Calu3 (cell line): ENCODE measurements at regions of chr17 and their contacts with region 1.

Region 1: DNA sequence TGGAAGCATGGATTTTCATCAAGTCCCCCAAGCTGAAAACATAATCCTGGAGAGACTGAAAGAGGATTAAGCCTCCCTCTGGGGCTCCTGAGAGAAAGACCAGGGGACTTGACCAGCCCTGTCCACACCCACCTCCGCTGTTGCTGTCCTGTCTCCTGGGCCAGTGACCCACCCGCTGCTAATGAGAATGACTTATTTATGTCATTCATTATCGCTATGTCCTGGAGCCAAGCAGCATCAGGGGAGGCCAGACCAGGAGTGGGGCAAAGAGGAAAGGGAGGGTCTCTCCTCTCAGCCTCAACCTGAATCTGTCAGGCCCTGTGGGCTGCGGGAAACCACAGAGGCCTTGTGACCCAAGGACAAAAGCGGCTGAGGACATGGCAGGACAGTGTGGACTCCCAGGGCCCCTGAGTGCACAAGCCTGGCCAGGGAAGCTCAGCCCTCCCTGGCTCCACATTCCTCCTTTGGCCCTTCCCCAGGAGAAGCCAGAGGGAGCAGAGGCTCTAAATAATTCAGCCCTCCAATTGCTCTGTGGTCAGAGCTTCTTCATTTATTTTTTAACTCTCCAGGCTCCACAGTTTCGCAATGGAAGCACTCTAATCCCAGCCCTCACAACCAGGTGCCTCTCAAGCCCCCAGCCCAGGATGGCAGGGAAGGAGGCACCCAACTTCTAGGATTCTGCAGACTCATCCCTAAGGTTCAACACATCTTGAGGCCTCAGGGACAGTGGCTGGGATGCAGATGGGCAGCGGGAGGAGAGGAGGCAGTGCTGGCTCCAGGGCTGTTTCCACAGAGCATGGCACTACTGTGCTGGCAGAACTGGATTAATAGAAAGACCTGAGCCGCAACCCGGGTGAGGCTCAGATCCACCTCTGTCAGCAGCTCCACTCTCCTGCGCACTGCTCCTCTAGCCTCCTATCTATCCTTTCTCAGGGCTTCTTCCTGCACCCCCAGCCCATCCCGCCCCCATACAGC is 19.1 kb downstream of the CUEDC1 start:
- DNase-seq: peak; percentile 55
- H3K4me3 Mint-ChIP-seq: peak overlapping the region; percentile 44
- H3K27ac Mint-ChIP-seq: peak overlapping the region; percentile 83
- H3K4me1 Mint-ChIP-seq: peaks cover 34% of the 10 kb centered on the region
- H3K27me3 Mint-ChIP-seq: no peaks in the 10 kb centered on the region
- CTCF ChIP-seq: no peak

Region 2: DNA sequence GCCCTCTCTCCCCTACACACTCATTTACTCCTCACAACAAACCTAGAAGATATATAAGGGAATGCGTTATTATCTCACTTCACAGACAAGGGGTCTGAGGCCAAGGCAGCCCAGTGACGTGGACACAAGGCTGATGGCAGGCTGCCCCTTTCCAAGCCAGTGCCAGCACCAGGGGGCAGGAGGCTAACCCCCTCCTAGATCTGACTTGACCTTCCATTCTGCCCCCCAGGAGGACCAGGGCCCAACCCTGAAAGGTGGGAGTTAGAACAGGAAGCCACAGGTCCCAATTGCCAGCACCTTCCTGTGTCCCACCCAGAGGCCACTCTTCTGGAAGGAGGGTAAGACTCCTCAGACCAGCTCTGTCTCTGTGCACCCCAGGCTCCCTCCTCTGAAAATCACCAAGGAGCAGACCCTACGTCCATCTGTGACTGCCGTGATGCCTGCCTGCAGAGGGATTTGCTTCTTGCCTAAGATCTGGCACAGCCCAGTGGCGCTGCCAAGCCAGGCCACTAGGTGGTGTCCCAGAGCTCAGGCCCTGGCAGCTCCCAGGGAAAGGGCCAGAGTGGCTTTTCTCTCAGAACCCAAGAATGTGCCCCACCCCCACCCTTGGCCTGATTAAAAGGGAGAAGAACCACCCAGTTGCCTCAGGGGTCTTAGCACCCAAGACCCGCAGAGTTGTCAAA is 43.8 kb before region 1 on chr17:
- CTCF ChIA-PET with region 1: interaction called, 11 read pairs
- intact Hi-C with region 1: no loop called
- DNase-seq: peak; percentile 86
- H3K4me3 Mint-ChIP-seq: peak overlapping the region; percentile 52
- H3K27ac Mint-ChIP-seq: peak overlapping the region; percentile 74
- H3K4me1 Mint-ChIP-seq: peaks cover 36% of the 10 kb centered on the region
- H3K27me3 Mint-ChIP-seq: no peaks in the 10 kb centered on the region
- CTCF ChIP-seq: peak; percentile 82

Region 3: DNA sequence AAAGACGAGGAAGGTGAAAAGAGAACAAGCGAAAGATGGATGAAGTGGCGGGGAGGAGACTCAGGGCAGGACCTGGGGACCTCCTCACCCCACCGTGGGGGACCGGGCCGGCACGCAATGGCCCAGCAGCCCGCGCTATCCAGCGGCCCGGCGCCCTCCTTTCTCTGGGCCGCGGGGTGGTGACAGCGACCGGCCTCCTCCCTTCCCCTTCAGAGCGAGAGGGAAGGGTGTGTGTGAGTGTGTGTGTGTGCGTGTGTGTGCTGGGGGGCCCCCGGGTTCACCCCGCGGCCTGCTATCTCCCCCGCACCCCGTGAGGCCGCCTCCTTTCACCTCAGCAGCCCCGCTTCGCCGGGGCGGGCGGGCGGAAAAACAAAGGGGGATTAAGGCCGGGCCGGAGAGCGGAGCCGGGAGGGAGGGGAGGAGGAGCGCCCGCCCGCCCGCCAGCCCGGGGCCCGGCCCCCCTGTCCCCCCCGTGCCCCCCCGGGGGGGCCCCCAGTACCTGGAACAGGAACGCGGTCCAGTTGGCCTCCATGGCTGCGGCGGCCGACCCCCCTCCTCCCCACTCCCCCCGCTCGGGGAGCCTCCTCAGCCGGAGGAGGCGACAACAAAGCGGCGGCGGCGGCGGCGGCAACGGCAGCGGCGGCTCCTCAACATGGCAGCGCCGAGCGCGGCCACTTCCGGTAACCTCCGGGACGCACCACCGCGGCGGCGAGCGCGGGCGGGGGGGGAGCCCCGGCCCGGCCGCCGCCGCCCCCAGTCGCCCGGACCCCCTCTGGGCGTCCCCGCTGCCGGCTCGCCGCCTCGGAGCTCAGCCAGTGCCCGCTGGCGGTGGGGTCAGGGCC is 51.7 kb after region 1 on chr17 and contains the start of gene VEZF1:
- CTCF ChIA-PET with region 1: no interaction called
- intact Hi-C with region 1: no loop called
- DNase-seq: peak; percentile 66
- H3K4me3 Mint-ChIP-seq: peak within 1 kb of the TSS; percentile 79
- H3K27ac Mint-ChIP-seq: peak within 1 kb of the TSS; percentile 93
- H3K4me1 Mint-ChIP-seq: peaks cover 15% of the 10 kb centered on the region
- H3K27me3 Mint-ChIP-seq: no peaks in the 10 kb centered on the region
- CTCF ChIP-seq: no peak
- total RNA-seq, gene VEZF1: 33.4 and 40.4 TPM in 2 replicates